Endothelial cell of umbilical vein (primary cell): ENCODE measurements at regions of chr10 and their contacts with region 1.

Region 1: GRCh38 chr10:79266543-79267312 is 80.5 kb upstream of the PPIF start:
- DNase-seq: peak; percentile 92
- H3K4me3 ChIP-seq: no peak overlapping the region
- H3K27ac ChIP-seq: peak overlapping the region; percentile 86
- H3K4me1 ChIP-seq: peaks cover 37% of the 10 kb centered on the region
- H3K27me3 ChIP-seq: no peaks in the 10 kb centered on the region
- CTCF ChIP-seq: no peak
- POLR2A ChIP-seq: no peak

Region 2: DNA sequence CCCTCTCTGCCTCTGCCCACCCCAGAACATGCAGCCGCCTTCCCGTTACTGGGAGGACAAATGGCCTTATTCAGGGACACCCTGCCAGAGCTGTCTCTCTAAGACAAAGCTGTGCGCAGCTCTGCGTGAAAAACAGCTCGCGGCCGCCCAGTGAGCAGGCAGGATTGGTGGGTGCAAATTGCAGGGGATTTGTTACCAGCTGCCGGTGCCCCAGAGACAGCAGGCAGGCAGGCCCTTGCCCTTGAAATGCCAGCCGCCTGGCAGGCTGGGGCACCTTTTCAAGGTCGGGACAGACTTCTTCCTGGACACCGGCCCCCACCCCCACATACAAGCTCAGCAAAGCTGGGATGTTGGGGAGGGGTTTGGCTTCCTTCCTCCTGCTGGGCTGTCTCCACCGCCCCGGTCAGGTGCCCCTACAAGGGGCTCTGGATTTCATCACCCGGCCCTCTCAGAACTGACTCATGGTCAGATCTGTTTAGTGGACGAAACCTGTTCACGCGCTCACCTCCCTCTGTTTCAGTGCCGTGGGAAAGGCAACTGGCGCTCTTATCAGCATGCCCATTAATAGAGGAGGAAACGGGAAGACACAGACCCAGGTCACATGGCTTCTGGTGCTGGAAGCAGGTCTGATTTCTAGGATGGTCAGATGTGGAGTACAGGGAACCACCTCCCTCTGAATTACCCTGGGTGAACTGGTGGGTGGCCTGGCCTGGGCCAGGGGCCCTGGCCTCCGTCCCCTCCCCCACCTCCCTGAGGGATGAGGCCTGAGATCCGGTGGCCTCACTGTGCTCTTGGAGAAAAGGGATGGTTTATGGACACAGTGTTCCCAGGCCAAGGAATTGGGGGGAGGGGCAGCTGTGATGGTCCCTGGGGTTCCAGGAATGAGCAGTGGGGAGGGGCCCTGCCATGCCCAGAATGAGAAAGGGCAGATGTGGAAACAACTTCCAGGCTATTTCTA is 43.4 kb before region 1 on chr10:
- CTCF ChIA-PET with region 1: no interaction called
- POLR2A ChIA-PET with region 1: no interaction called
- dilution Hi-C with region 1: no loop called
- intact Hi-C with region 1: loop called (anchors 1 kb)
- DNase-seq: peak; percentile 88
- H3K4me3 ChIP-seq: no peak overlapping the region
- H3K27ac ChIP-seq: peak overlapping the region; percentile 13
- H3K4me1 ChIP-seq: peaks cover 20% of the 10 kb centered on the region
- H3K27me3 ChIP-seq: no peaks in the 10 kb centered on the region
- CTCF ChIP-seq: no peak
- POLR2A ChIP-seq: no peak

Region 3: GRCh38 chr10:79234391-79235315 is 32.1 kb before region 1 on chr10:
- CTCF ChIA-PET with region 1: no interaction called
- POLR2A ChIA-PET with region 1: no interaction called
- dilution Hi-C with region 1: no loop called
- intact Hi-C with region 1: no loop called
- DNase-seq: no peak
- H3K4me3 ChIP-seq: no peak overlapping the region
- H3K27ac ChIP-seq: no peak overlapping the region
- H3K4me1 ChIP-seq: peaks cover 37% of the 10 kb centered on the region
- H3K27me3 ChIP-seq: no peaks in the 10 kb centered on the region
- CTCF ChIP-seq: no peak
- POLR2A ChIP-seq: no peak

Region 4: GRCh38 chr10:79286318-79286951 is 19.7 kb after region 1 on chr10:
- CTCF ChIA-PET with region 1: no interaction called
- POLR2A ChIA-PET with region 1: no interaction called
- dilution Hi-C with region 1: no loop called
- intact Hi-C with region 1: loop called (anchors 1 kb)
- DNase-seq: peak; percentile 76
- H3K4me3 ChIP-seq: no peak overlapping the region
- H3K27ac ChIP-seq: peak overlapping the region; percentile 56
- H3K4me1 ChIP-seq: peaks cover 17% of the 10 kb centered on the region
- H3K27me3 ChIP-seq: no peaks in the 10 kb centered on the region
- CTCF ChIP-seq: no peak
- POLR2A ChIP-seq: no peak

Region 5: DNA sequence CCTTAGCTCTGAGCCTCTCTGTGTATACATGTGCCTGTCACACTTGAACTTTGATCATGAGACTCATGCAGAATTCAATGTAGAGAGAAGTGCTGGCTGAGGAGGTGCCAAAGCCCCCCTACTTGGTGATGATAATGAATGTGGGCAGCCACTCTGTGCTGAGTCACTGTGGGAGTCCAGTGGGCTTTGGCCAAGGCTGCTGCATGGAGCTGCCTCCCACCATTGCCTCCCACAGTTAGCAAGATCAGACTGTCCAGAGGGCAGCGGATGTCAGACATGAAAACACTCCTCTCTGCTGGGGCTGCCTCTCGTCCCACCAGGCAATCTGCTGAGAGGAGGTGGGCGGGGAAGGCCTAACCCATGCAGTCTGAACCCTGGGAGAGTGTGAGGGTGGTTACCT is 1451.3 kb after region 1 on chr10:
- CTCF ChIA-PET with region 1: no interaction called
- POLR2A ChIA-PET with region 1: no interaction called
- dilution Hi-C with region 1: no loop called
- intact Hi-C with region 1: no loop called
- DNase-seq: no peak
- H3K4me3 ChIP-seq: no peak overlapping the region
- H3K27ac ChIP-seq: no peak overlapping the region
- H3K4me1 ChIP-seq: no peaks in the 10 kb centered on the region
- H3K27me3 ChIP-seq: no peaks in the 10 kb centered on the region
- CTCF ChIP-seq: no peak
- POLR2A ChIP-seq: no peak